Activated CD4-positive, alpha-beta T cell treated with anti-CD3 and anti-CD28 coated beads, Interleukin-2, amount 10 ng/mL, durations not matched to agents 24 days and 14 days (primary cell): ENCODE measurements at regions of chr19 and their contacts with region 1.

Region 1: GRCh38 chr19:4304530-4305252 is at the start of gene FSD1:
- DNase-seq: peak; percentile 95
- H3K4me3 Mint-ChIP-seq: peak within 1 kb of the TSS; percentile 78
- H3K27ac Mint-ChIP-seq: peak within 1 kb of the TSS; percentile 76
- H3K4me1 Mint-ChIP-seq: peaks cover 28% of the 10 kb centered on the region
- H3K27me3 Mint-ChIP-seq: no peaks in the 10 kb centered on the region
- total RNA-seq, gene FSD1: 44.2 and 44.3 TPM in 2 replicates

Region 2: GRCh38 chr19:4328243-4328990 is 23.7 kb after region 1 on chr19:
- intact Hi-C with region 1: loop called (anchors 2 kb)
- DNase-seq: peak; percentile 96
- H3K4me3 Mint-ChIP-seq: peak overlapping the region; percentile 90
- H3K27ac Mint-ChIP-seq: peak overlapping the region; percentile 93
- H3K4me1 Mint-ChIP-seq: peaks cover 26% of the 10 kb centered on the region
- H3K27me3 Mint-ChIP-seq: peaks cover 6% of the 10 kb centered on the region

Region 3: DNA sequence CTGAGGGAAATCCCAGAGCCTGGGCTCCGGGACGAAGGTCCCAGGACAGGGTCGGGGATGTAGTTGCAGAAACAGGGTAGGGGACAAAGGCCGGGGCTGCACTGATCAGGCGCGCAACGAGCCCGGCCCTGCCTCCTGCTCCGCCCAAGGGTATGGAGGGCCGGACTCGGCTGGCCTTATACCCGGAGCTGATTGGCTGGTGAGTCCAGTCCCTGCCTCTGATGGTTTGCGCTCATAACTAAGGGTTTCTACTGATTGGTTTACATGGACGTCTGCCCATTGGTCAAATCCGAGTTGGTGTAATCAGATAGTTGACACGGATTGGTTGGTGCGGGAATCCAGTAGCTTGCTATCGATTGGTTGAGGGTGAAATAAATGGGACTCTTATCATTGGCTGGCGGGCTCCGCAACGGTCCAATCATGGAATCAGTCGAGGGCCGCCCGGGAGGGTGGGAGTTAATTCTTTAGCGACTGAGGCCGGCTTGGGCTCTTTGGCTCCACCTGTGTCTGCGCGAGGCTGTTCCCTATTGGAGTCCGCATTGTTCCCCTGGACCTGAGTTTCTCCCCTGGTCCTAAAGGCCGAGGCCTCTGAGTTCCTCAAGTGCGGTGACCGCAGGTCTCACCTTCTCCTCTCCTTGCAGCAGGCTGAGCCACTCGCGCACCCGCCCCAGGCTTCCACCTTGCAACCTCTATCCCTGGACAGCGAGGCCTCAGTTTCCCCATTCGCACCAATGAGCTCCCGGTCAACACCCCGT is 38.1 kb after region 1 on chr19:
- intact Hi-C with region 1: loop called (anchors 1 kb)
- DNase-seq: peak; percentile 98
- H3K4me3 Mint-ChIP-seq: peak overlapping the region; percentile 93
- H3K27ac Mint-ChIP-seq: peak overlapping the region; percentile 95
- H3K4me1 Mint-ChIP-seq: peaks cover 20% of the 10 kb centered on the region
- H3K27me3 Mint-ChIP-seq: no peaks in the 10 kb centered on the region